Endothelial cell of umbilical vein (primary cell): ENCODE measurements at regions of chr12 and their contacts with region 1.

Region 1: DNA sequence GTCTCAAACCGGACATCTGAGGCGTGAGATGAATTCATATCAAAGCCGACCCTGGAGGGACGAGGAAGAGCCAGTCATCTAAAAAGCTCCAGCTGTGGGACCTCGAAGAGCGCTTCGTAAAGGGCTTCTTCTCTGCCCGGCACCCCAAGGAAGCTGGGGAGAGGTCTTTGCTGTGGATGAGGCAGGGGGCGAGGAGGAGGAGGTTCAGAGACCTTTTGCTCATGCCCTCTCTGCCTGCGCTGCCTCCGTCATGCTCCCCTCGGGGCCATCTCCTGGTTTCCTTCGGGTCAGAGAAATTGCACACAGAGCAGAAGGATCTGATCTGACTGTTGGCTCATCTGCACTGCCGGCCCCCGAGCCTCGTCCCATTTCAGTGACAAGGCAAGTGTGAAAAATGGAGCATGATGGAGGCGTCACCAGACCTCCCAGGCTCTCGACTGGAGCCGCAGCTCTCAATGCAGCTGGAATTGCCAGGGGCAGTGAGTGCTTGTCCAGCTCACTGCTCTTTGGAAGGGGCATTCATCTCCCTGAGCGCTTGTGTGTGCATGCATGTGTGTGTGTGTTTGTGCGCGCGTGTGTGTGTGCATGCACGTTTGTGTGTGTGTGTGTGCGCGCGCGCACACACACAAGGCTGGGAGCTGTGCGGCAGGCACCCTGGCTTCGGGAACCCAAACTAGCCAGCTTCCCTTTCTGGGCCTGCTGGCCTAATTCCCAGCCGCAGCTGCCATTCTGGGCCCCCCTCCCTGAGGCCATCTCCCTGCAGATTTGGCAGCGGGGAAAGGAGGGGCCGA is 9.2 kb downstream of the CABP1 start:
- DNase-seq: peak; percentile 8
- H3K4me3 ChIP-seq: no peak overlapping the region
- H3K27ac ChIP-seq: no peak overlapping the region
- H3K4me1 ChIP-seq: peaks cover 10% of the 10 kb centered on the region
- H3K27me3 ChIP-seq: peaks cover 35 to 39% of the 10 kb centered on the region in 2 experiments
- CTCF ChIP-seq: no peak
- POLR2A ChIP-seq: no peak

Region 2: GRCh38 chr12:120580787-120581723 is 68.6 kb before region 1 on chr12 and contains the start of gene POP5:
- CTCF ChIA-PET with region 1: interaction called, 71 read pairs
- POLR2A ChIA-PET with region 1: no interaction called
- dilution Hi-C with region 1: no loop called
- intact Hi-C with region 1: loop called (anchors 1 kb)
- DNase-seq: peak; percentile 97
- H3K4me3 ChIP-seq: peak within 1 kb of the TSS; percentile 48 to 98 (median 79)
- H3K27ac ChIP-seq: no peak within 1 kb of the TSS
- H3K4me1 ChIP-seq: peaks cover 13% of the 10 kb centered on the region
- H3K27me3 ChIP-seq: no peaks in the 10 kb centered on the region
- CTCF ChIP-seq: no peak
- POLR2A ChIP-seq: peak; percentile 71
- total RNA-seq, gene POP5: 25.7 and 30.5 TPM in 2 replicates

Region 3: GRCh38 chr12:120662879-120663278 is 13.2 kb after region 1 on chr12:
- CTCF ChIA-PET with region 1: interaction called, 64 read pairs
- POLR2A ChIA-PET with region 1: no interaction called
- dilution Hi-C with region 1: no loop called
- intact Hi-C with region 1: no loop called
- DNase-seq: no peak
- H3K4me3 ChIP-seq: no peak overlapping the region
- H3K27ac ChIP-seq: no peak overlapping the region
- H3K4me1 ChIP-seq: no peaks in the 10 kb centered on the region
- H3K27me3 ChIP-seq: peaks cover 2 to 5% of the 10 kb centered on the region in 2 experiments
- CTCF ChIP-seq: no peak
- POLR2A ChIP-seq: no peak

Region 4: GRCh38 chr12:120677765-120678473 is 28.3 kb after region 1 on chr12:
- CTCF ChIA-PET with region 1: interaction called, 34 read pairs
- POLR2A ChIA-PET with region 1: no interaction called
- dilution Hi-C with region 1: no loop called
- intact Hi-C with region 1: no loop called
- DNase-seq: peak; percentile 78
- H3K4me3 ChIP-seq: no peak overlapping the region
- H3K27ac ChIP-seq: peak overlapping the region; percentile 78
- H3K4me1 ChIP-seq: peaks cover 26% of the 10 kb centered on the region
- H3K27me3 ChIP-seq: no peaks in the 10 kb centered on the region
- CTCF ChIP-seq: no peak
- POLR2A ChIP-seq: no peak

Region 5: GRCh38 chr12:120698665-120699064 is 49.0 kb after region 1 on chr12:
- CTCF ChIA-PET with region 1: interaction called, 15 read pairs
- POLR2A ChIA-PET with region 1: no interaction called
- dilution Hi-C with region 1: no loop called
- intact Hi-C with region 1: no loop called
- DNase-seq: peak; percentile 71
- H3K4me3 ChIP-seq: no peak overlapping the region
- H3K27ac ChIP-seq: peak overlapping the region; percentile 66
- H3K4me1 ChIP-seq: peaks cover 17% of the 10 kb centered on the region
- H3K27me3 ChIP-seq: no peaks in the 10 kb centered on the region
- CTCF ChIP-seq: no peak
- POLR2A ChIP-seq: no peak

Region 6: GRCh38 chr12:120971299-120972179 is 321.9 kb after region 1 on chr12:
- CTCF ChIA-PET with region 1: interaction called, 87 read pairs
- POLR2A ChIA-PET with region 1: no interaction called
- dilution Hi-C with region 1: no loop called
- intact Hi-C with region 1: loop called (anchors 1 kb)
- DNase-seq: peak; percentile 58
- H3K4me3 ChIP-seq: no peak overlapping the region
- H3K27ac ChIP-seq: no peak overlapping the region
- H3K4me1 ChIP-seq: no peaks in the 10 kb centered on the region
- H3K27me3 ChIP-seq: no peaks in the 10 kb centered on the region
- CTCF ChIP-seq: peak; percentile 54 to 58
- POLR2A ChIP-seq: no peak

Region 7: DNA sequence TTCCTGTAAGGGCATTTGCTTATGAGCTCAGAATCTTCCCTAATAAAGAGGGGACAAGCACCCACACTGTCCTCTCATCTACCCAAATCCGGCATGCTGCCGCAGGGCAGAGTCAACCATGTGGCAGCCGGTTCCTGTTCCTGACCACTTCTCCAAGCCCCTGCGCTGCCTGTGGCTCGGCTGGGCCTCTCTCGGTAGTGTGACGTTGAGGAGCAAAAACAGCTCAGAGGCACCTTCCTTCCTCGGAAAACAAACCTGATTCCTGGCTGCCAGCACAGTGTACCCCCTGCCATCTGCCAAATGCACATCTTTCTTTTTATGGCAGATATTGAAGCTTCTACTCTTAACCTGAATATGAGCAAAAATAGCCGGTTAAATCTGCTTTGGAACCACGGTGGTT is 1319.2 kb after region 1 on chr12:
- CTCF ChIA-PET with region 1: no interaction called
- POLR2A ChIA-PET with region 1: no interaction called
- dilution Hi-C with region 1: no loop called
- intact Hi-C with region 1: no loop called
- DNase-seq: no peak
- H3K4me3 ChIP-seq: no peak overlapping the region
- H3K27ac ChIP-seq: no peak overlapping the region
- H3K4me1 ChIP-seq: peaks cover 7% of the 10 kb centered on the region
- H3K27me3 ChIP-seq: no peaks in the 10 kb centered on the region
- CTCF ChIP-seq: no peak
- POLR2A ChIP-seq: no peak

Region 8: GRCh38 chr12:122563361-122563760 is 1913.7 kb after region 1 on chr12:
- CTCF ChIA-PET with region 1: no interaction called
- POLR2A ChIA-PET with region 1: no interaction called
- dilution Hi-C with region 1: no loop called
- intact Hi-C with region 1: no loop called
- DNase-seq: no peak
- H3K4me3 ChIP-seq: no peak overlapping the region
- H3K27ac ChIP-seq: no peak overlapping the region
- H3K4me1 ChIP-seq: no peaks in the 10 kb centered on the region
- H3K27me3 ChIP-seq: no peaks in the 10 kb centered on the region
- CTCF ChIP-seq: no peak
- POLR2A ChIP-seq: no peak